ENCODE measurements at regions of chr16 and their contacts with region 1.

Region 1: GRCh38 chr16:67326472-67327309 is at the starts of genes KCTD19 and LRRC36:
- DNase-seq: peak; percentile 98
- ATAC-seq: peak; percentile 99
- H3K4me3 Mint-ChIP-seq: peak within 1 kb of the TSS; percentile 83
- H3K27ac Mint-ChIP-seq: no peak within 1 kb of the TSS
- H3K4me1 Mint-ChIP-seq: peaks cover 3% of the 10 kb centered on the region
- H3K27me3 Mint-ChIP-seq: peaks cover 56% of the 10 kb centered on the region
- CTCF ChIP-seq: peak; percentile 49
- total RNA-seq, gene KCTD19: 0.85 to 1.1 TPM (median 0.85 TPM) in 3 replicates
- total RNA-seq, gene LRRC36: 0.13 to 0.39 TPM (median 0.18 TPM) in 3 replicates

Region 2: GRCh38 chr16:67166598-67167168 is 160.0 kb before region 1 on chr16:
- CTCF ChIA-PET with region 1: no interaction called
- POLR2A ChIA-PET with region 1: no interaction called
- DNase-seq: no peak
- ATAC-seq: no peak
- H3K4me3 Mint-ChIP-seq: peak overlapping the region; percentile 56
- H3K27ac Mint-ChIP-seq: no peak overlapping the region
- H3K4me1 Mint-ChIP-seq: peaks cover 44% of the 10 kb centered on the region
- H3K27me3 Mint-ChIP-seq: peaks cover 94% of the 10 kb centered on the region
- CTCF ChIP-seq: no peak

Region 3: GRCh38 chr16:67260426-67261075 is 66.1 kb before region 1 on chr16:
- CTCF ChIA-PET with region 1: interaction called, 13 read pairs
- POLR2A ChIA-PET with region 1: no interaction called
- DNase-seq: no peak
- ATAC-seq: peak; percentile 67
- H3K4me3 Mint-ChIP-seq: no peak overlapping the region
- H3K27ac Mint-ChIP-seq: no peak overlapping the region
- H3K4me1 Mint-ChIP-seq: peaks cover 4% of the 10 kb centered on the region; the same call in 1 of the 2 replicates
- H3K27me3 Mint-ChIP-seq: no peaks in the 10 kb centered on the region
- CTCF ChIP-seq: no peak

Region 4: DNA sequence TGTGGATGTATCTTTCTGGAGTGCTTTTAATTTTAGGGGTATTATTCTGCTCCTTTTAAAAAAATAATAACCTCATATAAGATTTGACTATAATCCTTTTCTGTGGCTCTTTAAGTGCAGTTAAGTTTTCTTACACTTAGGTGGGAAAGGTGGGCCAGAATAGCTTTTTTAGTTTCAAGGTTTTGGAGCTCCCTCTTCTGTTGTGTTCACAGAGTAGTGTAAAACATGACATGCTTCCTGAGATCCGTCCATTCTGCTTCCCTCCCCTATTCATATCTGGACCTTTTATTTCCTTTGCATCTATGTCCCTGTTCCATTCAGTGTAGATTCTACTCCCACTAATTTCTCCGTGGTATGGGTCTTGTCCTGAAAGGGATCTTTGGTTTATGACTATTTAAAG is 12.8 kb after region 1 on chr16:
- CTCF ChIA-PET with region 1: interaction called, 34 read pairs
- POLR2A ChIA-PET with region 1: interaction called, 4 read pairs
- DNase-seq: no peak
- ATAC-seq: no peak
- H3K4me3 Mint-ChIP-seq: no peak overlapping the region
- H3K27ac Mint-ChIP-seq: no peak overlapping the region
- H3K4me1 Mint-ChIP-seq: no peaks in the 10 kb centered on the region
- H3K27me3 Mint-ChIP-seq: peaks cover 15% of the 10 kb centered on the region
- CTCF ChIP-seq: no peak

Region 5: GRCh38 chr16:67393035-67393787 is 66.5 kb after region 1 on chr16 and contains the start of gene TPPP3:
- CTCF ChIA-PET with region 1: interaction called, 74 read pairs
- POLR2A ChIA-PET with region 1: interaction called, 5 read pairs
- DNase-seq: peak; percentile 90
- ATAC-seq: peak; percentile 56
- H3K4me3 Mint-ChIP-seq: peak within 1 kb of the TSS; percentile 66
- H3K27ac Mint-ChIP-seq: no peak within 1 kb of the TSS
- H3K4me1 Mint-ChIP-seq: peaks cover 20% of the 10 kb centered on the region
- H3K27me3 Mint-ChIP-seq: peaks cover 56% of the 10 kb centered on the region
- CTCF ChIP-seq: peak; percentile 25; the same call in 1 of the 2 replicates
- total RNA-seq, gene TPPP3: 0.57 to 0.74 TPM (median 0.64 TPM) in 3 replicates

Region 6: GRCh38 chr16:67461600-67462592 is 135.2 kb after region 1 on chr16:
- CTCF ChIA-PET with region 1: interaction called, 14 read pairs
- POLR2A ChIA-PET with region 1: no interaction called
- DNase-seq: no peak
- ATAC-seq: no peak
- H3K4me3 Mint-ChIP-seq: no peak overlapping the region
- H3K27ac Mint-ChIP-seq: no peak overlapping the region
- H3K4me1 Mint-ChIP-seq: peaks cover 10% of the 10 kb centered on the region
- H3K27me3 Mint-ChIP-seq: no peaks in the 10 kb centered on the region
- CTCF ChIP-seq: no peak

Region 7: DNA sequence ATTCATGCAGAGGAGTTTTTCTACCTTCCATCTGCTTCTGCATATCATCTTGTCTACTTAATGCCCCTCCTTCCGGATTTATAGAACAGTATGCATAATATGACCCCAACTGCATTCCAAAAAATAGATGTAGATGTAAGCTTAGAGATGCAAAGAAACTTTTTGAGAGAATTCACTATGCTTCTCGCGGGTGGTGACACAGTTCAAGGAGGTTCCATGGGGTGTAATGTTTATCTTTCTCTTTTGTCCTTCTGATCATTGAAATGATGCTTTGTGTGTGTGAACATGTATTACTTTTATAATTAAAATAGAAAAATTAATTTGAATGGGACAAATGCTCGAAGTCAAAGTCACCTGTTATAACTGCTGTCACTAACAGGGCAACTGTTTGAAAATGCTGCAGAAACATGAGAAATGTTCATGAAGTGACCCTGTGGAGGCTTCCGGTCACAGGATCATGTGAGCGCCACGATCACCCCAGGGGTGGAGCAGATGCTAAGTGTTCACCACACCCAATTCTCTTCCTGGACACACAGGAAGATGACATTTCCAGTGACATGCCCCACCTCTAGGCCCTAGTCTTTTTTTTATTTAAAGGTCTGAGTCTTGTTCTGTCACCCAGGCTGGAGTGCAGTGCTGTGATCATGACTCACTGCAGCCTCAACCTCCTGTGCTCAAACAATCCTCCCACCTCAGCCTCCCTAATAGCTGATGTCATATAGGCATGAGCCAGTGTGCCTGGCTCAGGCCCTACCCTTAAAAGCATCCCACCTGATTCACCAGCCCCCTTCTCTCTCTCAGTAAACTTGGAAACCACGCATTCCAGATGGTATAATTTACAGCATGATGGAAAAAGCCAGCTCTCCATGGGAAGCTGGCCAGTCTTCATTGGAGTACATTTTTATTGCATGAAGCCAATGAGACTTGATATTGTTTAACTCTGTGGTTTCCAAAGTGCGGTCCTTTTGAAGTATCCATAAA is 177.6 kb after region 1 on chr16:
- CTCF ChIA-PET with region 1: no interaction called
- POLR2A ChIA-PET with region 1: no interaction called
- DNase-seq: no peak
- ATAC-seq: no peak
- H3K4me3 Mint-ChIP-seq: no peak overlapping the region
- H3K27ac Mint-ChIP-seq: no peak overlapping the region
- H3K4me1 Mint-ChIP-seq: peaks cover 5% of the 10 kb centered on the region
- H3K27me3 Mint-ChIP-seq: peaks cover 66% of the 10 kb centered on the region
- CTCF ChIP-seq: no peak

Measured in WTC11 (cell line).